Gastrocnemius medialis (tissue), 4 donors: ENCODE measurements at regions of chr6 and their contacts with region 1.

Region 1: DNA sequence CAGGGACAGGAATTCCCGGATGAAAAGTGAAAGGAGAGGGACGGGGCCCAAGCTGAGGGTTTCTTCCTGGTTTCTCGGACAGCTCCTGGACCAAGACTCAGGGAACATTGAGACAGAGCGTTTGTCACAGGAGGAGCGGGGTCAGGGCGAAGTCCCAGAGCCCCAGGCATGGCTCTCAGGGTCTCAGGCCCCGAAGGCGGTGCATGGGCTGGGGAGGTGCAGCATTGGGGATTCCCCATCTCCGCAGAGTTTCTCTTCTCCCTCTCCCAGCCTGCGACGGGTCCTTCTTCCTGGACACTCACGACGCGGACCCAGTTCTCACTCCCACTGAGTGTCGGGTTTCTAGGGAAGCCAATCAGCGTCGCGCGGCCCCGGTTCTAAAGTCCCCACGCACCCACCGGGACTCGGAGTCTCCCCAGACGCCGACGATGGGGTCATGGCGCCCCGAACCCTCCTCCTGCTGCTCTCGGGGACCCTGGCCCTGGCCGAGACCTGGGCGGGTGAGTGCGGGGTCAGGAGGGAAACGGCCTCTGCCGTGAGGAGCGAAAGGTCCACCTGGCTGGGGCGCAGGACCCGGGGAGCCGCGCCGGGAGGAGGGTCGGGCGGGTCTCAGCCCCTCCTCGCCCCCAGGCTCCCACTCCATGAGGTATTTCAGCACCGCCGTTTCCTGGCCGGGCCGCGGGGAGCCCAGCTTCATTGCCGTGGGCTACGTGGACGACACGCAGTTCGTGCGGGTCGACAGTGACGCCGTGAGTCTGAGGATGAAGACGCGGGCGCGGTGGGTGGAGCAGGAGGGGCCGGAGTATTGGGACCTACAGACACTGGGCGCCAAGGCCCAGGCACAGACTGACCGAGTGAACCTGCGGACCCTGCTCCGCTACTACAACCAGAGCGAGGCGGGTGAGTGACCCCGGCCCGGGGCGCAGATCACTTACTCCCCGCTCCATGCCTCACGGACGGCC is 54.6 kb upstream of the POLR1H start:
- DNase-seq: no peak
- ATAC-seq: peak; percentile 64 to 69
- H3K4me3 ChIP-seq: peak overlapping the region; percentile 58 to 88 (median 68)
- H3K27ac ChIP-seq: peak overlapping the region in 1 of 4 donors; percentile 51
- H3K4me1 ChIP-seq: peaks cover 9 to 11% of the 10 kb centered on the region in 2 donors
- H3K27me3 ChIP-seq: peaks cover 25 to 35% (median 31%) of the 10 kb centered on the region in 3 donors
- CTCF ChIP-seq: no peak
- POLR2A ChIP-seq: no peak

Region 2: GRCh38 chr6:29887819-29888776 is 118.4 kb before region 1 on chr6:
- in situ Hi-C with region 1: no loop called
- intact Hi-C with region 1: loop called (anchors 5 kb)
- DNase-seq: peak; percentile 22 to 66
- ATAC-seq: peak; percentile 83 to 92
- H3K4me3 ChIP-seq: peak overlapping the region in 3 of 4 donors; percentile 52 to 91 (median 59)
- H3K27ac ChIP-seq: peak overlapping the region in 3 of 4 donors; percentile 71 to 85 (median 75)
- H3K4me1 ChIP-seq: peaks cover 0 to 5% of the 10 kb centered on the region in 2 donors
- H3K27me3 ChIP-seq: peaks cover 0 to 12% (median 0%) of the 10 kb centered on the region in 3 donors
- CTCF ChIP-seq: no peak
- POLR2A ChIP-seq: no peak

Region 3: DNA sequence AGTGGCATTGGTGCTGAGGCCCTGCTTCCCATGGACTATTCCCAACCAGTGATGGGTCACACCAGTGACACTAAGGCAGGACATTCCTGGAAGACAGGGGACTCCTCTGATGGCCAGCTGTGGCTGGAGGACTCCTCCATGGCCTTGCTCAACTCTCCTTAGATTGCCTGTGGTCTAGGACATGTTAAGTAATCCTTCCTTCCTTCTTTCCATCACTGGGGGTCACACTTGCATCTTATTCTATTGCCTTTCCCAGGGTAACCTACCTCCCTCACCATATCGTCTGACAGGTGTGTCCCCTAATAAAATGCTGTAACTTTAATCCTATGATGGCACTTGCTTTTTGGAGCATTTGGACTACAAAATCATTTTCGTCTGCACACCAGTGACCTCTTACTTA is 88.6 kb before region 1 on chr6:
- in situ Hi-C with region 1: loop called in 1 of 4 experiments (anchors 5 kb)
- intact Hi-C with region 1: no loop called
- DNase-seq: no peak
- ATAC-seq: no peak
- H3K4me3 ChIP-seq: no peak overlapping the region
- H3K27ac ChIP-seq: no peak overlapping the region
- H3K4me1 ChIP-seq: no peaks in the 10 kb centered on the region
- H3K27me3 ChIP-seq: no peaks in the 10 kb centered on the region
- CTCF ChIP-seq: no peak
- POLR2A ChIP-seq: no peak

Region 4: DNA sequence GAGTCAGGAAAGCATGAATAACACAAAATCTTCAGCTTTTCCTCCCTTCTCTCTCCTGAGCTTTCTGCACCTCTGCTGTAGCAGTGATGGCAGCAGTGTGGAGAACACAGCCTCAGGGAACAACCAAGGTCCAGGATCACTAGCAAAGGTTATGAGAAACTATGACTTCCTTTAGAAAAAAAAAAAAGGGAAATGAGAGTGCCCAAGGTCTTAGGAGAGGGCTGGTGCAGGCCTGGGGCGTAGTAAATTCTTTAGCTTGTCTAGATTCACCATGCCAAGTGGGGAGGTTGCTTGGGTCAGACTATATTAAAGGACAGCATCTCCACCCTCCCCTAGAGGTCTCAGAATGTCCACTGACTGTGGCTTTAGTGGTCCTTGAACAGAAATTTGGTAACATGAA is 14.2 kb after region 1 on chr6:
- in situ Hi-C with region 1: no loop called
- intact Hi-C with region 1: no loop called
- DNase-seq: no peak
- ATAC-seq: no peak
- H3K4me3 ChIP-seq: no peak overlapping the region
- H3K27ac ChIP-seq: no peak overlapping the region
- H3K4me1 ChIP-seq: no peaks in the 10 kb centered on the region
- H3K27me3 ChIP-seq: no peaks in the 10 kb centered on the region
- CTCF ChIP-seq: no peak
- POLR2A ChIP-seq: no peak

Region 5: DNA sequence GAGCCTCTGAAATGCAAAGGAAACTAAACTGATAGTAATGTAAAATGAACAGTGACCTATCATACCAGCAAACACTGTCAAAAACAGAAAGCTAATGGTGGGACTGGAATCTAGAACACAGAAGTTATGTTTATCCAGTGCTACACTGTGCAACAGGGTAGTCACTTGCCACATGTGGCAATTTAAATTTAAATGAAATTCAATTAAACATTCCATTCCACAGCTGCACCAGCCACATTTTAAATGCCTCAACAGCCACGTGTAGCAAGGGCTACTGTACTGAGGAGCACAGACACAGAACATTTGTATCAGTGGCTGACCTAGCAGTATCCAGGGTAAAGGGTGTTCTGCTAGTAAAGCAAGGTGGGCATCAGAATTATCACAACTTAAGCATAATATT is 49.1 kb after region 1 on chr6:
- in situ Hi-C with region 1: no loop called
- intact Hi-C with region 1: loop called (anchors 5 kb)
- DNase-seq: no peak
- ATAC-seq: no peak
- H3K4me3 ChIP-seq: no peak overlapping the region
- H3K27ac ChIP-seq: no peak overlapping the region
- H3K4me1 ChIP-seq: peaks cover 8 to 9% of the 10 kb centered on the region in 2 donors
- H3K27me3 ChIP-seq: no peaks in the 10 kb centered on the region
- CTCF ChIP-seq: no peak
- POLR2A ChIP-seq: no peak

Region 6: GRCh38 chr6:30238174-30238795 is 231.8 kb after region 1 on chr6:
- in situ Hi-C with region 1: no loop called
- intact Hi-C with region 1: no loop called
- DNase-seq: no peak
- ATAC-seq: no peak
- H3K4me3 ChIP-seq: no peak overlapping the region
- H3K27ac ChIP-seq: no peak overlapping the region
- H3K4me1 ChIP-seq: no peaks in the 10 kb centered on the region
- H3K27me3 ChIP-seq: no peaks in the 10 kb centered on the region
- CTCF ChIP-seq: no peak
- POLR2A ChIP-seq: no peak

Region 7: GRCh38 chr6:30616811-30617564 is 610.5 kb after region 1 on chr6 and contains the start of gene PPP1R10:
- in situ Hi-C with region 1: no loop called
- intact Hi-C with region 1: no loop called
- DNase-seq: peak; percentile 100
- ATAC-seq: peak; percentile 79 to 81
- H3K4me3 ChIP-seq: peak within 1 kb of the TSS; percentile 71 to 89 (median 82)
- H3K27ac ChIP-seq: peak within 1 kb of the TSS; percentile 95 to 99 (median 98)
- H3K4me1 ChIP-seq: peaks cover 34 to 40% of the 10 kb centered on the region in 2 donors
- H3K27me3 ChIP-seq: no peaks in the 10 kb centered on the region
- CTCF ChIP-seq: no peak
- POLR2A ChIP-seq: peak; percentile 100
- total RNA-seq, gene PPP1R10: 24.1 to 31.5 (median 27.0) TPM

Region 8: DNA sequence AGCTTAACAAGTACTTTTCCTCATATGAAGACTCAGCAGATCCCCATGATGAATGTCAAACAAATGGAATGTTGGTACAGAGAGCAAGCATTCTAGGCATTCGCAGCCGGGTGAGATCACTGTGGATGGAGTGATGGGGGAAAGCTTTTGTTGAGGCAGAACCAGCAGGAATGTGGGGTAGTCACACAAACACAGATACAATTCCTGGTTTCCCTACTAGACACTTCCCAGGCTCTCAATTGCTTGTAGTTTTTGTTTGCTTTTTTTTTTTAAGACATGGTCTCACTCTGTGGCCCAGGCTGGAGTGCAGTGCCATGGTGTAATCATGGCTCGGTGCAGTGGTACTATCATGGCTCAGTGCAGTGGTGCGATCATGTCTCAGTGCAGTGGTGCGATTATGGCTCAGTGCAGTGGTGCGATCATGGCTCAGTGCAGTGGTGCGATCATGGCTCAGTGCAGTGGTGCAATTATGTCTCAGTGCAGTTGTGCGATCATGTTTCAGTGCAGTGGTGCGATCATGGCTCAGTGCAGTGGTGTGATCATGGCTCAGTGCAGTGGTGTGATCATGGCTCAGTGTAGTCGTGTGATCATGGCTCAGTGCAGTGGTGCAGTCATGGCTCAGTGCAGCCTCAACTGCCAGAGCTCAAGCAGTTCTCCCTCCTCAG is 753.3 kb after region 1 on chr6:
- in situ Hi-C with region 1: no loop called
- intact Hi-C with region 1: no loop called
- DNase-seq: no peak
- ATAC-seq: no peak
- H3K4me3 ChIP-seq: no peak overlapping the region
- H3K27ac ChIP-seq: no peak overlapping the region
- H3K4me1 ChIP-seq: peaks cover 0 to 5% of the 10 kb centered on the region in 2 donors
- H3K27me3 ChIP-seq: no peaks in the 10 kb centered on the region
- CTCF ChIP-seq: no peak
- POLR2A ChIP-seq: no peak